Body of pancreas (tissue), 4 donors: ENCODE measurements at regions of chr1 and their contacts with region 1.

Region 1: GRCh38 chr1:13813398-13814012 is 113.5 kb downstream of the PRDM2 start:
- DNase-seq: peak in 2 of 4 donors; percentile 12 to 32
- ATAC-seq: no peak
- H3K4me3 ChIP-seq: no peak overlapping the region
- H3K27ac ChIP-seq: no peak overlapping the region
- H3K4me1 ChIP-seq: peaks cover 24% of the 10 kb centered on the region
- H3K27me3 ChIP-seq: no peaks in the 10 kb centered on the region
- CTCF ChIP-seq: peak in 5 of 7 experiments; percentile 19 to 36 (median 33)
- POLR2A ChIP-seq: no peak

Region 2: DNA sequence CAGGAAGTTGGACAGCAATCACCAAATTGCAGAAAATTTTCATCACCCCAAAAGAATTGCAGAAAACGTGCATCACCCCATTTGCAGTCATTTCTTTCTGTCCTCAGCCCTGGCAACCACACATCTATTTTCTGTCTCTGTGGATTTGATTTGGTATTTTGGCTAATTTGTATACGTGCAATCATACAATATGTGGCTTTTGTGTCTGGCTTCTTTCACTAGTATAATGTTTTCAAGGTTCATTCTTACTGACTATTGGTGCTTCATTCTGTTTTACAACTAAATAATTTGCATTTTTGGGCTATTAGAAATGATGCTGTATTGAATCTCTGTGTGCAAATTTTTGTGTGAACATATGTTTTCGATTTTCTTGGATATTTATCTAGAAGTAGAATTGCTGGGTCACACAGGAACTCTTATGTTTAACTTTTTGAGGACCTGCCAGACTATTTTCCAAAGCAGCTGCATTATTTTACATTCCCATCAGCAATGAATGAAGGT is 138.3 kb before region 1 on chr1:
- intact Hi-C with region 1: loop called (anchors 10 kb)
- DNase-seq: no peak
- ATAC-seq: no peak
- H3K4me3 ChIP-seq: no peak overlapping the region
- H3K27ac ChIP-seq: no peak overlapping the region
- H3K4me1 ChIP-seq: no peaks in the 10 kb centered on the region
- H3K27me3 ChIP-seq: no peaks in the 10 kb centered on the region
- CTCF ChIP-seq: no peak
- POLR2A ChIP-seq: no peak

Region 3: DNA sequence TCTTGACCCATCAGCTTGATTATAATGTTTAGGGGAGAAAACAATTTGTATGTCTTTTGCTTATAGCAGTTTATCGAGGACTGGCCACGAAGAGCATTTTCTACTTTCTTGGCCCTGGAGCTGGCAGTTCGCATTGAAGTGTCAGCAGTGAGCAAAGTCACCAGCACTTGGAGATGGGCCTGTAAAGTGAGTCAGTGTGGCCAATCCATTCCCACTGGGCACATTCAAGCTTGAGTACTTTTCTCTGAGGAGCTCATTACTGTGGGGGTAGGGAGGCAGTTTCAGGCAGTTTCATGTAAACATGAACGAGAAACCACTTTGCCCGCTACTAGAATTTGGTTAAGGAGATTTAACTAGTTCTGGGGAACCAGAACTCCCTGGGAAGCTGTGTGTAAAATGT is 51.3 kb after region 1 on chr1:
- intact Hi-C with region 1: no loop called
- DNase-seq: no peak
- ATAC-seq: no peak
- H3K4me3 ChIP-seq: no peak overlapping the region
- H3K27ac ChIP-seq: no peak overlapping the region
- H3K4me1 ChIP-seq: no peaks in the 10 kb centered on the region
- H3K27me3 ChIP-seq: no peaks in the 10 kb centered on the region
- CTCF ChIP-seq: no peak
- POLR2A ChIP-seq: no peak